Activated CD4-positive, alpha-beta T cell treated with anti-CD3 and anti-CD28 coated beads for 36 hours (primary cell): ENCODE measurements at regions of chr6 and their contacts with region 1.

Region 1: GRCh38 chr6:85323435-85324040 is 126.3 kb upstream of the NT5E start:
- DNase-seq: peak; percentile 88
- ATAC-seq: peak; percentile 53
- H3K4me3 Mint-ChIP-seq: no peak overlapping the region
- H3K27ac Mint-ChIP-seq: no peak overlapping the region
- H3K4me1 Mint-ChIP-seq: no peaks in the 10 kb centered on the region
- H3K27me3 Mint-ChIP-seq: peaks cover 8% of the 10 kb centered on the region

Region 2: DNA sequence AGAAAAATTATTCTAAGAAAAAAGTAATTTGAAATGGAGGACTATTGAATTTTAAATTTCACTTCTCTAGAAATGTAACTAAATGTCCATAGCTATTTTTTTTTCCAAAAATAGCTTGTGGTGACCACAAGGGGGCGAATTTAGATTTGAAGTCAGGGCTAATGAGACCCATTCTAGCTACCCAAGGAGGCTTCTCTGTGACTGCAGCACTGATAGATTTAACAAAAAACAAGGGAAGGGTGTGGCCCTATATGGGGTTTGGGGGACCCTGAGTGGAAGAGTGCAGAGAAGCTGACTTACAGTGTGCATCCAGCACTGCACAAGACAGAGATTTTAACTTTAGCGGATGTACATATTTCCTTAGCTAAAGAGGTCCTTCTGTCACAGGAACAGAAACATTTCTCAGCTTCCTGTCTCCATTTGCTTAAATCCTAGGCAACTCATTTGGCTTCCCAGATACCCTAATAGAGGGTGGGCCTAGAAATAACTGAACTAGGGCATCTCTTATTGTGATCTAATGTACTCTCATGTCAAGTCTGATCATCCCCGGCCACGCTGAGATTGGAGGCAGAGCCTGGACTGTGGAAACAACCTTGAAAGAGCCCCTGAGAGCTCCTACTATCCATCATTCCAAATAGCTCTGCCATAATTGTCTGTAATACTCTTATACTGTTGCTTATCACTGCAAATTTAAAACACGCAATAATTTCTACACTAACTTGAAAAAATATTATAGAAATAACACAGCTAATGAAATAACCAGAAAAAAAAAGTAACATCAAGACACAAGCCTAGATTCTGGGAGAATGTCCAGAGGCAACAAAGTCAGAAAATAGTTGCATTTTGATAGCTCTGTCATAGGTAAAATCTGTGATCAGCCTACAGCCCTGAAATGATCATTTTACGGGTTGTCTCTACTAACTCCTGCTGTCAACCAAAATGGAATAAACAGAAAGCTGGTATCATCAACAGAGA is 1708.2 kb before region 1 on chr6:
- CTCF ChIA-PET with region 1: interaction called, 4 read pairs
- POLR2A ChIA-PET with region 1: no interaction called
- intact Hi-C with region 1: loop called in 1 of 2 experiments (anchors 1 kb)
- DNase-seq: no peak
- ATAC-seq: no peak
- H3K4me3 Mint-ChIP-seq: no peak overlapping the region
- H3K27ac Mint-ChIP-seq: no peak overlapping the region
- H3K4me1 Mint-ChIP-seq: no peaks in the 10 kb centered on the region
- H3K27me3 Mint-ChIP-seq: peaks cover 5% of the 10 kb centered on the region

Region 3: DNA sequence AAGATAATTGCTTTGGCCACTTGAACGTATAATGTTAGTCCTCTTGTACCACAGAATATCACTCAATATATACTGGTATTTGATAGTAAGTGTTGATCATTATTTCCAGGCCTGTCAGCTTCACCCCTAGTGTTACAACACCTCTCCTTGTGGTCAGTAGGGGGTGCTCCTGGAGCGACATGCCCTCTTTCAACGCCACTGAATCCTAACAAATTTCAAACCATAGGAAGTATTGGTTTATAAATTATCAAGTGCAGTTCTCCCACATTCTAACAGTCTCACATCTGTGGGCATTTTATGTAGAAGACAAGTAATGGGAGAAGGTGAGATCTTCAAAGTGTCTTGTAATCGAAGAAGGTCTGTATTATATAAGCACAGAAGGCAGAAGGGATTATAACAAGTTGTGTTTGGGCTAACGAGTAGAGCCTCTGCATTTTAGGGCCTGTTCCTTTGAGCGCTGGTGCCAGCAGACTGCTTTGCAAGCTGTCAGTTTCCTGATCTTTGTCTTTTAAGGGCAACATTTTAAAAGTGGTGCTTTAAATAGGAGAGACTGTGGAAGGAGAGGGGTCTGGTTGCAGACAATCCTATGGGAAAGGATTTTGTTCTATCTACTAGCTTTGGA is 1039.0 kb before region 1 on chr6:
- CTCF ChIA-PET with region 1: no interaction called
- POLR2A ChIA-PET with region 1: no interaction called
- intact Hi-C with region 1: loop called in 1 of 2 experiments (anchors 5 kb)
- DNase-seq: no peak
- ATAC-seq: no peak
- H3K4me3 Mint-ChIP-seq: no peak overlapping the region
- H3K27ac Mint-ChIP-seq: no peak overlapping the region
- H3K4me1 Mint-ChIP-seq: no peaks in the 10 kb centered on the region
- H3K27me3 Mint-ChIP-seq: peaks cover 15% of the 10 kb centered on the region

Region 4: DNA sequence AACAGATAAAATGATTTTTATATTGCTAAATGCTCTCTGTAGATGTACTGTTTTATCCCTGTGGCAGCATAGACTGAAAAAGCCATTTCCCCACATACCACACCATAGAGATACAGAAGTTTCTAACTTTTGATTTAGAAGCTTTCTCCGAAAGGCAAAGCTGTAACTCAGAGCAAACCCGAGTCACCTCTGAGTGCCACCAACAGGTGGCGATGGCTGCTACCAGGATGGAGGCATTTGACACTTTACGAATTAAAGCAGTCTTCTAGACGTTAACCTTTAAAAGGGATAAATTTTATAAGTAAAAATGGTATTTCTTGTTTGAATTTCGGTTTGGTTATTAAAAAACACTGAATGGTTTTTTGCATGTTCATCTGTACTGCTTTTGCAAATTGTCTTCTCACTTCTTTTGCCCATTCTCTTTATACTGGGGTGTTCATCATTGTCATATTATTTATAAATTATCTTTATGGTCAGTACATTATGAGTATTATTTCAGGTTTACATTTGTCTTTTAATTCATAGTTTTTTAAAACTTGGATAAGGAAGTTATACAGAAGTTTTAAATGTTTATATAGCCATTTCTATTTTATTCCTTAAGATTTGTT is 895.1 kb before region 1 on chr6:
- CTCF ChIA-PET with region 1: no interaction called
- POLR2A ChIA-PET with region 1: no interaction called
- intact Hi-C with region 1: loop called (anchors 1 to 5 kb)
- DNase-seq: peak; percentile 52
- ATAC-seq: no peak
- H3K4me3 Mint-ChIP-seq: no peak overlapping the region
- H3K27ac Mint-ChIP-seq: no peak overlapping the region
- H3K4me1 Mint-ChIP-seq: no peaks in the 10 kb centered on the region
- H3K27me3 Mint-ChIP-seq: peaks cover 3% of the 10 kb centered on the region

Region 5: GRCh38 chr6:84774157-84774984 is 549.2 kb before region 1 on chr6:
- CTCF ChIA-PET with region 1: no interaction called
- POLR2A ChIA-PET with region 1: no interaction called
- intact Hi-C with region 1: loop called in 1 of 2 experiments (anchors 10 kb)
- DNase-seq: peak; percentile 56
- ATAC-seq: peak; percentile 85
- H3K4me3 Mint-ChIP-seq: no peak overlapping the region
- H3K27ac Mint-ChIP-seq: no peak overlapping the region
- H3K4me1 Mint-ChIP-seq: peaks cover 3% of the 10 kb centered on the region
- H3K27me3 Mint-ChIP-seq: peaks cover 56% of the 10 kb centered on the region

Region 6: GRCh38 chr6:85240787-85241385 is 82.7 kb before region 1 on chr6:
- CTCF ChIA-PET with region 1: no interaction called
- POLR2A ChIA-PET with region 1: no interaction called
- intact Hi-C with region 1: no loop called
- DNase-seq: no peak
- ATAC-seq: no peak
- H3K4me3 Mint-ChIP-seq: no peak overlapping the region
- H3K27ac Mint-ChIP-seq: no peak overlapping the region
- H3K4me1 Mint-ChIP-seq: no peaks in the 10 kb centered on the region
- H3K27me3 Mint-ChIP-seq: peaks cover 2% of the 10 kb centered on the region